Activated CD4-positive, alpha-beta T cell treated with anti-CD3 and anti-CD28 coated beads, Interleukin-2, amount 10 ng/mL, durations not matched to agents 24 days and 14 days (primary cell): ENCODE measurements at regions of chr19 and their contacts with region 1.

Region 1: GRCh38 chr19:39390755-39391592 is at the starts of genes MED29 and PAF1:
- DNase-seq: peak; percentile 99
- H3K4me3 Mint-ChIP-seq: peak within 1 kb of the TSS; percentile 98
- H3K27ac Mint-ChIP-seq: peak within 1 kb of the TSS; percentile 97
- H3K4me1 Mint-ChIP-seq: peaks cover 28% of the 10 kb centered on the region
- H3K27me3 Mint-ChIP-seq: no peaks in the 10 kb centered on the region
- total RNA-seq, gene MED29: 36.0 and 38.7 TPM in 2 replicates
- total RNA-seq, gene PAF1: 47.1 and 50.6 TPM in 2 replicates

Region 2: DNA sequence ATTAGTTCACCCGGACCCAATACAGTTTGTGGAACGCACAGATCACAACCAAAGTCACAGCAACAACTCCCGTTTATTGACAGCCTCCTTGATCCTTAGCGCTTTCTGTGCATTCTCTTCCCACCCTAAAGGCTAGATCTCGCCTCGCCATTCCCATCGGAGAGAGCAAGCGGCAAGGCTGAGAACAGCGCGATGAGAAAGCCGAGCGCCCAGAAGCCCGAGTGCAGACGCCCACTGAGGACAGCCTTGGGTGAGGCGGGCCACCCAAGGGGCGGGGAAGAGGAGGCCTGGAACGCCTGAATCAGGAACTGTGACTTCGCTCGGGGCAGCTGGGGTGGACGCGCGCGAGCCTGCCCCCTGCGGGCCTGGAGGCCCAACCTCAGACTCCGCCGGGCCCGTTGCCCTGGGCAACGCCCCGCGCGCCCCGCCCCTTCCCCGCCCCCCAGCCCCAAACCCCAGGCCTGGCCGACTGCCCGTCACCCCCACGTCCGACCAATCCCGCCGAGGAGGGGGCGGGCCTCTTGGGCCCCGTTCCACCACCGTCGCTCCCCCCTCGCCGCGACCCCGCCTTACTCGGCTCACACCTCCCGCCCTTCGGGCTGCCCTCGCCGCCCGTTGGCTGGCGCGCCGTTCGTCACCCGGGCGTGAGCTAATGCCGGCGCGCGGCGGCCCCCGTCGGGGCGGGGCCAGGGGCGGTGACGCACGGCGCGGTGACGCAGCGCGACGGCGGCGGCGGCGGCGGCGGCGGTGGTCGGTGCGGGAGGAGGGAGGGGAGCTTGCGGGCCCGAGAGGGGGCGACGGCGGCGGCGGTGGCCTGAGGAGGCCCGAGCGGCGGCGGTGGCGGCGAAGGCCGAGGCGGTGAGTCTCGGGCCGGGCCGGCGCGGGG is 49.0 kb before region 1 on chr19 and contains the start of gene SAMD4B:
- intact Hi-C with region 1: loop called (anchors 1 kb)
- DNase-seq: peak; percentile 100
- H3K4me3 Mint-ChIP-seq: peak within 1 kb of the TSS; percentile 91
- H3K27ac Mint-ChIP-seq: peak within 1 kb of the TSS; percentile 90
- H3K4me1 Mint-ChIP-seq: peaks cover 68% of the 10 kb centered on the region
- H3K27me3 Mint-ChIP-seq: no peaks in the 10 kb centered on the region
- total RNA-seq, gene SAMD4B: 68.9 and 71.4 TPM in 2 replicates

Region 3: DNA sequence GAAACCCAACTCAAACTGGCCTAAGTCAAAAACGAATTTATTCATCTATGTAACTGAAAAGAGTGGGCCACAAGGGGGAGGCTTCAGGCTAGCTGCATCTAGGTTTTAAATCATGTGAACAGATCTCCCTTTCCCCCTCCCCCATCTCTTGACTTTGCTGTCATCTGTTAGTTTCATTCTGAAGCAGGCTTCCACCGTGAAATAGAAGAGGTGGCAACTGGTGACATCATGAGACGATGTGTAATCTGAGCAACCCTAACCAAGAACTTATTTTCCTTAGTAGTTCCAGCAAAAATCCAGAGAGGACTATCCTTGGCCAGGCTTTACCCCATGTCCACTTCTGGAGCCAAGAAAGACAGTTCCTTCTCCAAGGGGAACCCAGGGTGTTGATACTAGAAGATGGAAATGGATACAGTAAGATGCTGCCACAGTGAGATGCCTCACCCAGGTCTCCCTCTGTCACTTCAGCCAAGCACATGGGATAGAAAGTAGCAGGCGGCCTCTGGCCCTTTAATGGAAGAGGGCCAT is 39.4 kb before region 1 on chr19:
- intact Hi-C with region 1: loop called (anchors 2 kb)
- DNase-seq: peak; percentile 86
- H3K4me3 Mint-ChIP-seq: peak overlapping the region; percentile 15
- H3K27ac Mint-ChIP-seq: peak overlapping the region; percentile 85
- H3K4me1 Mint-ChIP-seq: peaks cover 37% of the 10 kb centered on the region
- H3K27me3 Mint-ChIP-seq: no peaks in the 10 kb centered on the region

Region 4: DNA sequence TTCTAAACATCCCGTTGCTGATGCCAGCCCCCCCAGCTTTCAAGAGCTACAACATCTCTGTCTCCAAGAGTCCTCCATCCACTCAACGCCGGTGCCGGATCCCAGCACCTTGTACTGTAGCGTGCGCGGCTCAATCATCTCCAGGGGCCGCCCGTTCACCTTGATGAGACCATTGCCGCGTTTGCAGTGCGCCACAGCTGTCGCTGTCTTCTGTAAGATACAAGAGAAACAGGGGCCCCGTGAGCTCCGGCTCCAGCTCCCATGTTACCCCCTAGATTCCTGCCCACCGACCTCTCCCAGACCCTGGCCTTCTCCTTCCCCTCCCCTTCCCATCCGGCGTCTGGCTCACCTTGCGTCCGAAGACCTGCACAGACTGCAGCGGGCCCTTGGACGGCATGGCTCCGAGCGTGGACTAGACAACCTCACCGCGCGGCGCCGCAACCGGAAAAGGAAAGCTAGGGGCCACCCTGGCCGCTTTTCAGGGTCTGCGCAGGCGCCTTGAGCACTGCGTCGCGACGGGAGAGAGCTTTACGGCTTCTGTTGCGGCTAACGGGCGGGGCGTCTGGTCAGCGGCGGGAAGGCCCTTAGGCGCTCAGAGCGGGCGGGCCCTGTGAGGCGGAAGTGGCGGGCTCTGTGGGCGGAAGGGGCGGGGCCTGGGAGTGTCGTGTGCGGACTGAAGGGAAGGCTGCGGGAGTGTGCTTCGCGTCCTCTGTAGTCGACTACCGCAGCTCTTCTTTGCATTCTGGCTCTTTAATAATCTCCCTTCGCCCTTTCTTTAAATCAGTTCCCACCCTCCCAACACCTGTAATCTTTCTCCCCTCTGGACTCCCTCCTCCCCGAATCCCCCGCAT is 44.8 kb after region 1 on chr19 and contains the start of gene RPS16:
- intact Hi-C with region 1: loop called (anchors 2 kb)
- DNase-seq: peak; percentile 100
- H3K4me3 Mint-ChIP-seq: peak within 1 kb of the TSS; percentile 91
- H3K27ac Mint-ChIP-seq: peak within 1 kb of the TSS; percentile 99
- H3K4me1 Mint-ChIP-seq: peaks cover 45% of the 10 kb centered on the region
- H3K27me3 Mint-ChIP-seq: no peaks in the 10 kb centered on the region
- total RNA-seq, gene RPS16: 2,597 and 2,671 TPM in 2 replicates

Region 5: GRCh38 chr19:39480337-39481228 is 89.6 kb after region 1 on chr19 and contains the start of gene TIMM50:
- intact Hi-C with region 1: loop called (anchors 1 kb)
- DNase-seq: peak; percentile 99
- H3K4me3 Mint-ChIP-seq: peak within 1 kb of the TSS; percentile 92
- H3K27ac Mint-ChIP-seq: peak within 1 kb of the TSS; percentile 94
- H3K4me1 Mint-ChIP-seq: peaks cover 21% of the 10 kb centered on the region
- H3K27me3 Mint-ChIP-seq: no peaks in the 10 kb centered on the region
- total RNA-seq, gene TIMM50: 141 and 143 TPM in 2 replicates